ENCODE measurements at regions of chr5 and their contacts with region 1.

Region 1: GRCh38 chr5:160199410-160199911 is 29.8 kb upstream of the FABP6 start:
- DNase-seq: peak; percentile 66
- H3K4me3 ChIP-seq: no peak overlapping the region
- H3K27ac ChIP-seq: no peak overlapping the region
- H3K4me1 ChIP-seq: no peaks in the 10 kb centered on the region
- CTCF ChIP-seq: peak; percentile 92

Region 2: DNA sequence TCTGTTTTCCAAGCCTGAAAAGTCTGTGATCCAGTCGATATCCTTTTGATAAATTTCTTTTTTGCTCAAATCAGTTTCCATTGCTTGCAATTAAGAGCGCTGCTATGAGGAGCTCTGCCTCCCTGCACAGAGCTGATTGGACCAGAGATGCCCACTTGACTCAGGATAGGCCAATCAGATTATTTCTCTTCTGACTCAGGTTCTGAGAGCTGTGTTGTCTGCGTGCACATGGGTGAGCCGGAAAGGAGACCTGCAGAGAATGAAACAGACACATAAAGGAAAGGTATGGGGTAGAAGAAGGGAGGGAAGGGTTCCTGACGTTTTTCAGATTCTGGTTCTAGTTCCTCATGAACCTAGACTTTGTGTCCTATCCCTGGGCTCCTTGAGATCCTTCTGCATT is 14.1 kb after region 1 on chr5:
- CTCF ChIA-PET with region 1: no interaction called
- POLR2A ChIA-PET with region 1: no interaction called
- intact Hi-C with region 1: no loop called
- DNase-seq: peak; percentile 32
- H3K4me3 ChIP-seq: no peak overlapping the region
- H3K27ac ChIP-seq: no peak overlapping the region
- H3K4me1 ChIP-seq: no peaks in the 10 kb centered on the region
- CTCF ChIP-seq: no peak

Region 3: GRCh38 chr5:160237571-160238093 is 38.2 kb after region 1 on chr5:
- CTCF ChIA-PET with region 1: no interaction called
- POLR2A ChIA-PET with region 1: no interaction called
- intact Hi-C with region 1: loop called (anchors 2 kb)
- DNase-seq: no peak
- H3K4me3 ChIP-seq: no peak overlapping the region
- H3K27ac ChIP-seq: no peak overlapping the region
- H3K4me1 ChIP-seq: no peaks in the 10 kb centered on the region
- CTCF ChIP-seq: no peak

Region 4: DNA sequence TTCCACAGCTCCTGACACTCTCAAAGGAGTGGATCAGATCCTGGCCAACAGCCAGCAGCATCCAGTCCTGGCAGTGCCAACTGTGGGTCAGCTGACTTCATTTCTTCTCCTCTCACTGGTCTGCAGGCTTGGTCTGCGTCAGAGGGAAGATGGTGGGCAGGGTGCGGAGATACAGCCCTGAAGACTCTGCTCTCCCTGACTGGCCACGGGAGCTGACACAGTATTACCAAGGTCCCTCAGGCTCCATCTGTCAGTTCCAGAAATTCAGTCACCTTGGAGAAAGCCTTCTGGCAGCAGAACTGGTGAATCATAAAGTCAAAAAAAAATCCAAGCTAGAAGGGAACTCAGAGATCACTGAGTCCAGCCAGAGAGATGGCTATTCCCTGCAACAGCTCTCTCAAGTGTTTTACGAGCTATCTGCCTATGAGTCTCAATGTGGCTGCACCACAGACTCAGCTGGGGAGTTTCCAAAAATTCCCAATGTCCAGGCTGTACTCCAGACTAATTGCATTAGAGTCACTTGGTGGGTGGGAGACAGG is 143.0 kb after region 1 on chr5:
- CTCF ChIA-PET with region 1: no interaction called
- POLR2A ChIA-PET with region 1: no interaction called
- intact Hi-C with region 1: loop called (anchors 1 kb)
- DNase-seq: no peak
- H3K4me3 ChIP-seq: no peak overlapping the region
- H3K27ac ChIP-seq: no peak overlapping the region
- H3K4me1 ChIP-seq: no peaks in the 10 kb centered on the region
- CTCF ChIP-seq: no peak

Measured in OCI-LY7 (cell line).